GM18951 (cell line): ENCODE measurements at regions of chr2 and their contacts with region 1.

Region 1: DNA sequence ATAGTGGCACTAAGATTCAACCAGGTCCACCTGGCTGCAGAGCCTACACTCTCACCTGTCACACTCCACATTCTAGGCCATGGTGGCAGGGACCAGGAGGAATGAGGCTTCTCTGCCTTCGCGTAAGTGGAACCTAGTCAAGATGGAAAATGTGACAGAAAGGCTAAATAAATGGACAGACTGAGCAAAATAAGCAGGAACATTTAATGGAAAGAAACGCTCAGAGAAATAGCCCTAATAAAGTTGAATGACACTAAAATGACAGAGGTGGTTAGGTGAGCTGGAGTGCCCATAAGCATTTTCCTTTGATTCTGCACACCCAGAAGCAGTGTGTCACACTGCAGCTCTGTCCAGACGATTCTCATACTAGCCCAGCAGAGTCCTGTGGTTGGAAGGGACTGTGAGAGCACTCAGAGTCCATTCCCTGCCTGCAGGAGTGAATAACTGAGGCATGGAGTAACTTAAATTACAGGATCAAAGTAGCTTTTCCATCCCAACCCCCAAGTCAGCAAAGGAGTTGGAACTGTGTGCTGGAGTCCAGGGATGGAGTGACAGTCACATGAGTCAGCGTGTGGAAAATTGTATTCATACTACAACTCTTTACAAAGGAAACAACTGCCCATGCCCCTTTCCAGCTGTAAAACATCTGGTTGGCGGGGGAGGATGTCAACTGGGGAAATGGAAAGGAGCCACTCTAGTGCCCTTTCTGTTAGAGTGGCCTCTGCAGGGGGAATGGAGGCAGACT is 105.4 kb upstream of the LGALSL start:
- POLR2A ChIP-seq: no peak

Region 2: DNA sequence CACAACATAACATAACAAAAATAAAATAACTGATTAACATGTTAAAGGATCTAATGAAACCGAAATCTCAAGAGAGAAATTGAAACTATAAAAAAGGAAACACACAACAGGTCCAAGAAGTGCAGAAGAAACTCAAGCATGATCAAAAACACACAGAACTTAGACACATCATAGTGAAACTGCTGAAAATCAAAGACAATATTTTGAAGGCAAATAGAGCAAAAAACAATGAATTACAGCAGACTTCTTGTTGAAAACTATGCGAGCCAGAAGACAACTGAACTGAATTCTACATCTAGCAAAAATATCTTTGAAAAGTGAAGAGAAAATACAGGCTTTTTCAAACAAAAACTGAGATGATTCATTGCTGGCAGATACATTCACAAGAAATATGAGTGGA is 445.6 kb before region 1 on chr2:
- in situ Hi-C with region 1: no loop called
- POLR2A ChIP-seq: no peak

Region 3: GRCh38 chr2:64128943-64129391 is 219.6 kb before region 1 on chr2:
- in situ Hi-C with region 1: no loop called
- POLR2A ChIP-seq: no peak

Region 4: GRCh38 chr2:64609227-64609941 is 260.8 kb after region 1 on chr2:
- in situ Hi-C with region 1: no loop called
- POLR2A ChIP-seq: peak; percentile 61

Region 5: DNA sequence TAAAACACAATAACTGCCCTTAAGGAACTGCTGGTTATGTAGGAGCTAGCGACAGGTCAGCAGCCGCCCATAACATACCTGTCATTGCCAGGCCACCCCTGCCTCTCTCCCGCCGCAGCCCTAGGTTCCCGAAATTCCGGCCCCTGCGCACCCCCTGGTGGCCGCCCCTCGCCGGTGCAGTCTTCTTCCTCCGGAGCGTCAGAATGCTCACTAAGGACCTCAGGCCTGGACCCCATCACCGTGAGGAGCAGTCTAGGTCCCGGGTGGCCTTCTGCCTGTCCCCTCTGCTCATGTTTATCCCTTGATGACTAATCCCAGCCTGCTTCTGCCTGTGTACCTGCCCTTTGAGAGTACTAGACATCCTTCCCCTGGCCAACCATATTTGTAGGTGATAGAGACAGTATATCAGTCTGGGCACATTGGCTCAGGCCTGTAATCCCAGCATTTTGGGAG is 524.9 kb after region 1 on chr2:
- in situ Hi-C with region 1: loop called (anchors 10 kb)
- POLR2A ChIP-seq: no peak